ENCODE measurements at regions of chr10 and their contacts with region 1.

Region 1: GRCh38 chr10:128047351-128047750 is 78.9 kb downstream of the MKI67 start:
- DNase-seq: peak; percentile 65 to 93 (median 85)
- ATAC-seq: peak; percentile 92
- H3K4me3 ChIP-seq: peak overlapping the region; percentile 63 to 72
- H3K4me3 Mint-ChIP-seq: peak overlapping the region; percentile 87
- H3K27ac ChIP-seq: peak overlapping the region; percentile 83 to 93
- H3K27ac Mint-ChIP-seq: peak overlapping the region; percentile 95
- H3K4me1 ChIP-seq: peaks cover 42% of the 10 kb centered on the region
- H3K4me1 Mint-ChIP-seq: peaks cover 58% of the 10 kb centered on the region
- H3K27me3 ChIP-seq: no peaks in the 10 kb centered on the region
- H3K27me3 Mint-ChIP-seq: no peaks in the 10 kb centered on the region
- CTCF ChIP-seq: no peak

Region 2: GRCh38 chr10:127826154-127826725 is 221.1 kb before region 1 on chr10:
- CTCF ChIA-PET with region 1: no interaction called
- POLR2A ChIA-PET with region 1: no interaction called
- intact Hi-C with region 1: no loop called
- DNase-seq: peak in 1 of 9 experiments; percentile 38
- ATAC-seq: no peak
- H3K4me3 ChIP-seq: no peak overlapping the region
- H3K4me3 Mint-ChIP-seq: no peak overlapping the region
- H3K27ac ChIP-seq: no peak overlapping the region
- H3K27ac Mint-ChIP-seq: no peak overlapping the region
- H3K4me1 ChIP-seq: no peaks in the 10 kb centered on the region
- H3K4me1 Mint-ChIP-seq: no peaks in the 10 kb centered on the region
- H3K27me3 ChIP-seq: no peaks in the 10 kb centered on the region
- H3K27me3 Mint-ChIP-seq: peaks cover 4% of the 10 kb centered on the region
- CTCF ChIP-seq: no peak

Region 3: DNA sequence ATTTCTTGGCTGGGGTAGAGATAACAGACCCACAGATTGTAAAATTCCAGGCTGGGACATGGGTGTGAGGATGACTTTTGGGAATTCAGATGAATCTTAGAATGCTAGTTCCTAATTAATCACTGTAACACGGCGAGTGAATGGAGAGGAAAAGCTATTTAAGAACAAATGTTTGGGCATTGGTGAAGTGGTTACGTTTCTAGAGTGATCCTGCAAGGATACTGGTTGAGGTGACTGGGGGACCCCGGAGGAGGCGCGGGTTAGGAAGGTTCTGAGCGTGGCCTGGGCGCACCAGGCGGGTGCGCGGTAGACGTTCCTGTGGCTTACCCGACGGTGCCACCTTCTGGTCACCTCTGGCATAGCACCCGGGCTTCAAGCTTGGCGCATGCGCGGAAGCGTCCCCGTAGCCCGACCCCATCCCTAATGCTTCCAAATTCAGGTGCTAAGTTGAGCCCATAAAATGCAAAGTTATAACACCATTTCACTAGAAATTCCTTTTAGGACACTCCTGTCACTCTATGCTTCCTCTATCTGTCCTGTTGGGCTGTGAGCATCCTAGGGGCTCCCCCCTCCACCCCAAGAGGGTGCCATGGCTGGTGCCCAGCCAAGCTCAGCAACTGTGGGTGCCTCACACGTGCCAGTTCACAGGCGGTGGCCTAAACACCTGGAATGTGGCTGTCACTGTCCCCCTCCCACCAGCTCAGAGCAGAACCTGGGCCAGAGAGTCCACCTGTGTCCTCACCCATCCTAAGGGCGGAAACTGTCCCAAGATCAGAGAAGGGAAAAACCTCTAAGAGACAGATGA is 36.0 kb before region 1 on chr10:
- CTCF ChIA-PET with region 1: interaction called, 3 read pairs
- POLR2A ChIA-PET with region 1: interaction called, 3 read pairs
- intact Hi-C with region 1: loop called in 1 of 2 experiments (anchors 1 kb)
- DNase-seq: peak; percentile 78 to 94 (median 88)
- ATAC-seq: peak; percentile 100
- H3K4me3 ChIP-seq: no peak overlapping the region
- H3K4me3 Mint-ChIP-seq: peak overlapping the region; percentile 15
- H3K27ac ChIP-seq: no peak overlapping the region
- H3K27ac Mint-ChIP-seq: no peak overlapping the region
- H3K4me1 ChIP-seq: peaks cover 6% of the 10 kb centered on the region
- H3K4me1 Mint-ChIP-seq: peaks cover 8% of the 10 kb centered on the region
- H3K27me3 ChIP-seq: no peaks in the 10 kb centered on the region
- H3K27me3 Mint-ChIP-seq: peaks cover 3% of the 10 kb centered on the region
- CTCF ChIP-seq: peak; percentile 88

Region 4: DNA sequence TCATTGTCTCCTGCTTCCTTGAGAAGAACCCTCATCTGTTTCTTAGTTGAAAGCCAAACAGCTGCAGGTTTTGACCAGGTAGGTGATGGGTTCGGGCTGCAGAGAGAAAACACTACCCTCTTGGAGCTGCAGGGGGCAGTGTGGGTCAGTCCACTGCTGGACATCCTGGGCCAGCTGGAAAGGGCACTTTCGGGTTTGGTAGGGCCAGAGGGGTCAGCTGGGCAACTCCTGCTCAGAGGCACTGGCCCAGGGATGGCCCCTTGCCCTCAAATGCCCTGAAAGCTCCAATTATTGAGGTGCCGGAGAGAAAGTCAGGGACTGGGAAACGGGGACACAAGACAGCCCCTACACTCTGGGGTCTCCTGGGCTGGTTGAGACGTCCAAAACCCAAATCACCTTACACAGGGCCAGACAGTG is 11.8 kb before region 1 on chr10:
- CTCF ChIA-PET with region 1: interaction called, 75 read pairs
- POLR2A ChIA-PET with region 1: interaction called, 3 read pairs
- intact Hi-C with region 1: loop called in 1 of 2 experiments (anchors 1 kb)
- DNase-seq: peak; percentile 40 to 78 (median 70)
- ATAC-seq: peak; percentile 78
- H3K4me3 ChIP-seq: no peak overlapping the region
- H3K4me3 Mint-ChIP-seq: no peak overlapping the region
- H3K27ac ChIP-seq: no peak overlapping the region
- H3K27ac Mint-ChIP-seq: no peak overlapping the region
- H3K4me1 ChIP-seq: no peaks in the 10 kb centered on the region
- H3K4me1 Mint-ChIP-seq: no peaks in the 10 kb centered on the region
- H3K27me3 ChIP-seq: no peaks in the 10 kb centered on the region
- H3K27me3 Mint-ChIP-seq: no peaks in the 10 kb centered on the region
- CTCF ChIP-seq: peak; percentile 73

Region 5: GRCh38 chr10:128064108-128064969 is 17.0 kb after region 1 on chr10:
- CTCF ChIA-PET with region 1: interaction called, 34 read pairs
- POLR2A ChIA-PET with region 1: interaction called, 57 read pairs
- intact Hi-C with region 1: loop called (anchors 1 kb)
- DNase-seq: peak in 8 of 9 experiments; percentile 29 to 90 (median 68)
- ATAC-seq: peak; percentile 77
- H3K4me3 ChIP-seq: peak overlapping the region; percentile 36 to 49
- H3K4me3 Mint-ChIP-seq: peak overlapping the region; percentile 74
- H3K27ac ChIP-seq: peak overlapping the region; percentile 33 to 92
- H3K27ac Mint-ChIP-seq: peak overlapping the region; percentile 81
- H3K4me1 ChIP-seq: peaks cover 63% of the 10 kb centered on the region
- H3K4me1 Mint-ChIP-seq: peaks cover 80% of the 10 kb centered on the region
- H3K27me3 ChIP-seq: no peaks in the 10 kb centered on the region
- H3K27me3 Mint-ChIP-seq: no peaks in the 10 kb centered on the region
- CTCF ChIP-seq: no peak

Region 6: GRCh38 chr10:128102480-128103228 is 55.3 kb after region 1 on chr10:
- CTCF ChIA-PET with region 1: no interaction called
- POLR2A ChIA-PET with region 1: no interaction called
- intact Hi-C with region 1: loop called in 1 of 2 experiments (anchors 1 kb)
- DNase-seq: no peak
- ATAC-seq: no peak
- H3K4me3 ChIP-seq: peak overlapping the region in 1 of 2 experiments; percentile 25
- H3K4me3 Mint-ChIP-seq: peak overlapping the region; percentile 33
- H3K27ac ChIP-seq: peak overlapping the region; percentile 23 to 31
- H3K27ac Mint-ChIP-seq: peak overlapping the region; percentile 70
- H3K4me1 ChIP-seq: peaks cover 46% of the 10 kb centered on the region
- H3K4me1 Mint-ChIP-seq: peaks cover 52% of the 10 kb centered on the region
- H3K27me3 ChIP-seq: no peaks in the 10 kb centered on the region
- H3K27me3 Mint-ChIP-seq: no peaks in the 10 kb centered on the region
- CTCF ChIP-seq: no peak

Region 7: DNA sequence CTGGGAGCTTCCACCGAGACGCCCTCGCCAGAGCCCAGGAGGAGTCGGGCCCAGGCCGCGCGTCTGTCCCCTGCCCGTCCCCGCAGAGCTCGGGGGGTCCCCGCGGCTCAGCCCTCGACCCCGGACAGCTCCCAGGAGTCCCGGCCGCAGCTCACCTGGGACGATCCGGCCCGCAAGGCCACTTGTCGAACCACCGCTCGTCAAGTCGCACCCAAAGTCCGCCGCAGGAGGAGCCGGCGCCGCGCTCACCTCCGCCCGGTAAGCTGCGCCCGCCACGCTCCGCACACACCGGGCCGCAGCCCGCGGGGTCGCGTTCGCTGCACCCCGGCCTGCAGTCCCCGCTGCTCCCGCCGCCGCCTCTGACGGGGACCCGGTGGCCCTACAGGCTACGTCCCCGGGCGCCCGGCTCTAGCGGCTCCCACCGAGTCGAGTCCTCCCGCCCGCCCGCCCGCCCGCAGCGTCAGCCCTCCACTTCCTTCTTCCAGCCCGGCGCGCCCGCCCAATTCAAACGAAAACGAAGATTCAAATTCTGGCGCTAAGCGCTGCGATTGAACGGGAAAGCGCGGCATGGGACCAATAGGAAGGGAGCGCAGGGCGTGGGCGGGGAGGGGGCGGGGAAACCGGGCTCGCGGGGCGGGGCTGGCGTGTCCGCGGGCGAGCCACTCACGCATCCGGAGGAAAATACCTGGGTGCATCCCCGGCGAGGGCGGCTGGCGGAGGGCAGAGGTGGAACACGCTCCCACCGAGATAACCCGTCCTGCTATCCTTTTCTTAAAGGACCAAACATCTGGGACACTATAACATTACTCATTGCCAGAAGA is 78.8 kb after region 1 on chr10 and contains the start of gene MKI67:
- CTCF ChIA-PET with region 1: no interaction called
- POLR2A ChIA-PET with region 1: no interaction called
- intact Hi-C with region 1: loop called in 1 of 2 experiments (anchors 1 kb)
- DNase-seq: peak; percentile 74 to 95 (median 89)
- ATAC-seq: peak; percentile 94
- H3K4me3 ChIP-seq: peak within 1 kb of the TSS; percentile 75 to 84
- H3K4me3 Mint-ChIP-seq: peak within 1 kb of the TSS; percentile 87
- H3K27ac ChIP-seq: peak within 1 kb of the TSS; percentile 29 to 36
- H3K27ac Mint-ChIP-seq: no peak within 1 kb of the TSS
- H3K4me1 ChIP-seq: peaks cover 17% of the 10 kb centered on the region
- H3K4me1 Mint-ChIP-seq: peaks cover 26% of the 10 kb centered on the region
- H3K27me3 ChIP-seq: peaks cover 11 to 14% of the 10 kb centered on the region in 2 experiments
- H3K27me3 Mint-ChIP-seq: peaks cover 30% of the 10 kb centered on the region
- CTCF ChIP-seq: no peak
- total RNA-seq, gene MKI67: 1.5 to 1.9 TPM

Region 8: GRCh38 chr10:128230401-128230800 is 183.1 kb after region 1 on chr10:
- CTCF ChIA-PET with region 1: no interaction called
- POLR2A ChIA-PET with region 1: no interaction called
- intact Hi-C with region 1: no loop called
- DNase-seq: no peak
- ATAC-seq: no peak
- H3K4me3 ChIP-seq: no peak overlapping the region
- H3K4me3 Mint-ChIP-seq: no peak overlapping the region
- H3K27ac ChIP-seq: no peak overlapping the region
- H3K27ac Mint-ChIP-seq: no peak overlapping the region
- H3K4me1 ChIP-seq: no peaks in the 10 kb centered on the region
- H3K4me1 Mint-ChIP-seq: no peaks in the 10 kb centered on the region
- H3K27me3 ChIP-seq: peaks cover 0 to 2% of the 10 kb centered on the region in 2 experiments
- H3K27me3 Mint-ChIP-seq: peaks cover 7% of the 10 kb centered on the region
- CTCF ChIP-seq: no peak

Region 9: GRCh38 chr10:128326251-128326650 is 278.9 kb after region 1 on chr10:
- CTCF ChIA-PET with region 1: no interaction called
- POLR2A ChIA-PET with region 1: no interaction called
- intact Hi-C with region 1: no loop called
- DNase-seq: peak in 1 of 9 experiments; percentile 27
- ATAC-seq: no peak
- H3K4me3 ChIP-seq: no peak overlapping the region
- H3K4me3 Mint-ChIP-seq: no peak overlapping the region
- H3K27ac ChIP-seq: no peak overlapping the region
- H3K27ac Mint-ChIP-seq: no peak overlapping the region
- H3K4me1 ChIP-seq: no peaks in the 10 kb centered on the region
- H3K4me1 Mint-ChIP-seq: no peaks in the 10 kb centered on the region
- H3K27me3 ChIP-seq: no peaks in the 10 kb centered on the region
- H3K27me3 Mint-ChIP-seq: peaks cover 22% of the 10 kb centered on the region
- CTCF ChIP-seq: no peak

Region 10: DNA sequence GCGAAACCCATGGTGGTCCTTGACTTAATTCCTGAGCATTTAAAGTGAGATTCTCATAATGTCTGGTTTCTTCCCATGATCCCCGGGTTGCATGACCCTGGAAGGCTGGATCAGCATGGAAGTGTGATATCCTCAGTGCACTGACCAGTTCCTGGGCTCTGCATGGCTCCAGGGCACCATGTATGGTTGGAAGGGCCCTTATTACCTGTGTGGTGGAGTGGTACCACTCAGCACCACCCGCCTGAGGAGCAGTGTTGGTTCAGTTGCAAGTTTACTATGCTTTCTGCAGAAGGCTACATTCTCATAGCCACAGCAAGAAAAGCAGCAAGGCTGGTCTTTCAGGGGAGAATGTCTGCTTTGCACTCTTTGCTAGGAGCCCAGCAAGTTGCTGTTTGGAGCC is 404.5 kb after region 1 on chr10:
- CTCF ChIA-PET with region 1: no interaction called
- POLR2A ChIA-PET with region 1: no interaction called
- intact Hi-C with region 1: no loop called
- DNase-seq: no peak
- ATAC-seq: no peak
- H3K4me3 ChIP-seq: no peak overlapping the region
- H3K4me3 Mint-ChIP-seq: no peak overlapping the region
- H3K27ac ChIP-seq: no peak overlapping the region
- H3K27ac Mint-ChIP-seq: no peak overlapping the region
- H3K4me1 ChIP-seq: no peaks in the 10 kb centered on the region
- H3K4me1 Mint-ChIP-seq: no peaks in the 10 kb centered on the region
- H3K27me3 ChIP-seq: peaks cover 0 to 2% of the 10 kb centered on the region in 2 experiments
- H3K27me3 Mint-ChIP-seq: no peaks in the 10 kb centered on the region
- CTCF ChIP-seq: no peak

Region 11: DNA sequence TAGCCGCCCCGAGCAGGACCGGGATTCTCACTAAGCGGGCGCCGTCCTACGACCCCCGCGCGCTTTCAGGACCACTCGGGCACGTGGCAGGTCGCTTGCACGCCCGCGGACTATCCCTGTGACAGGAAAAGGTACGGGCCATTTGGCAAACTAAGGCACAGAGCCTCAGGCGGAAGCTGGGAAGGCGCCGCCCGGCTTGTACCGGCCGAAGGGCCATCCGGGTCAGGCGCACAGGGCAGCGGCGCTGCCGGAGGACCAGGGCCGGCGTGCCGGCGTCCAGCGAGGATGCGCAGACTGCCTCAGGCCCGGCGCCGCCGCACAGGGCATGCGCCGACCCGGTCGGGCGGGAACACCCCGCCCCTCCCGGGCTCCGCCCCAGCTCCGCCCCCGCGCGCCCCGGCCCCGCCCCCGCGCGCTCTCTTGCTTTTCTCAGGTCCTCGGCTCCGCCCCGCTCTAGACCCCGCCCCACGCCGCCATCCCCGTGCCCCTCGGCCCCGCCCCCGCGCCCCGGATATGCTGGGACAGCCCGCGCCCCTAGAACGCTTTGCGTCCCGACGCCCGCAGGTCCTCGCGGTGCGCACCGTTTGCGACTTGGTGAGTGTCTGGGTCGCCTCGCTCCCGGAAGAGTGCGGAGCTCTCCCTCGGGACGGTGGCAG is 1419.5 kb after region 1 on chr10 and contains the start of gene MGMT:
- CTCF ChIA-PET with region 1: no interaction called
- POLR2A ChIA-PET with region 1: no interaction called
- intact Hi-C with region 1: loop called in 1 of 2 experiments (anchors 5 kb)
- DNase-seq: peak; percentile 96 to 99 (median 98)
- ATAC-seq: peak; percentile 98
- H3K4me3 ChIP-seq: peak within 1 kb of the TSS; percentile 83 to 89
- H3K4me3 Mint-ChIP-seq: peak within 1 kb of the TSS; percentile 85
- H3K27ac ChIP-seq: peak within 1 kb of the TSS; percentile 63 to 78
- H3K27ac Mint-ChIP-seq: peak within 1 kb of the TSS; percentile 86
- H3K4me1 ChIP-seq: peaks cover 17% of the 10 kb centered on the region
- H3K4me1 Mint-ChIP-seq: peaks cover 27% of the 10 kb centered on the region
- H3K27me3 ChIP-seq: no peaks in the 10 kb centered on the region
- H3K27me3 Mint-ChIP-seq: no peaks in the 10 kb centered on the region
- CTCF ChIP-seq: no peak
- total RNA-seq, gene MGMT: 6.4 to 7.0 TPM